ENCODE measurements at regions of chr1 and their contacts with region 1.

Region 1: GRCh38 chr1:4006676-4007374 is 106.8 kb upstream of the C1orf174 start:
- DNase-seq: peak; percentile 83
- ATAC-seq: peak; percentile 58
- H3K4me3 ChIP-seq: no peak overlapping the region
- H3K4me3 Mint-ChIP-seq: peak overlapping the region; percentile 43
- H3K27ac ChIP-seq: peak overlapping the region; percentile 82 to 95
- H3K27ac Mint-ChIP-seq: peak overlapping the region; percentile 96
- H3K4me1 ChIP-seq: peaks cover 4 to 26% of the 10 kb centered on the region in 2 donors
- H3K4me1 Mint-ChIP-seq: peaks cover 15% of the 10 kb centered on the region
- H3K27me3 ChIP-seq: no peaks in the 10 kb centered on the region
- H3K27me3 Mint-ChIP-seq: no peaks in the 10 kb centered on the region
- CTCF ChIP-seq: no peak

Region 2: DNA sequence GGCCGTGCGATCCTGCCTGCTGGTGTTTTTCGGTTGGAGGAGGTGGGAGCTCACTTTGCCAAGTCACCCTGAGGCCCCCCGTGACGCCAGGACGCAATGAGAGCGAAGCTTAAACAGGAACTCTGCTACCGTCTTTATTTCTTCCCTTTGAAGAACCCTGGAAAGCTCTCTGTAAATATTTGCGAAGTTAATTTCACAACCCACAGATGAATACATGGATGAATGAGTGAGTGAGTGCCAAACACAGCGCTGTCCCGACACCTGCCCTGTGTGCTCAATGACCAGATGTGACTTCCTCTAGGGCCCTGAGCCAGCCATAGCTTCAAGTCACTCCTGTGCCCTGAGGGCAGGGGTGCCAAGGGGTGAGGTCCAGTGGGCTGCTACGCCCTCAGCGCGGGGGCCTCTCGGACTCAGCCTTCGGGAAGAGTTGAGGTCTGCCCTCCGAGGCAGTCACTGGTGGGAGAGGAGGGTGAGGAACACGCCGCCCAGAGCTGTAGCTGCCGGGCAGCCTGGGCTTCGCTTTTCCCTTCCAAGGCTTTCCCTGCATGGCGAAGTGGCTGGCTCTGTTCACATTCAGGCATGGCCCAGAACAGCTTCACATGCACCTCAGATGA is 63.9 kb before region 1 on chr1:
- CTCF ChIA-PET with region 1: no interaction called
- POLR2A ChIA-PET with region 1: no interaction called
- intact Hi-C with region 1: no loop called
- DNase-seq: no peak
- ATAC-seq: no peak
- H3K4me3 ChIP-seq: no peak overlapping the region
- H3K4me3 Mint-ChIP-seq: no peak overlapping the region
- H3K27ac ChIP-seq: no peak overlapping the region
- H3K27ac Mint-ChIP-seq: no peak overlapping the region
- H3K4me1 ChIP-seq: no peaks in the 10 kb centered on the region
- H3K4me1 Mint-ChIP-seq: no peaks in the 10 kb centered on the region
- H3K27me3 ChIP-seq: no peaks in the 10 kb centered on the region
- H3K27me3 Mint-ChIP-seq: peaks cover 10% of the 10 kb centered on the region
- CTCF ChIP-seq: no peak

Region 3: DNA sequence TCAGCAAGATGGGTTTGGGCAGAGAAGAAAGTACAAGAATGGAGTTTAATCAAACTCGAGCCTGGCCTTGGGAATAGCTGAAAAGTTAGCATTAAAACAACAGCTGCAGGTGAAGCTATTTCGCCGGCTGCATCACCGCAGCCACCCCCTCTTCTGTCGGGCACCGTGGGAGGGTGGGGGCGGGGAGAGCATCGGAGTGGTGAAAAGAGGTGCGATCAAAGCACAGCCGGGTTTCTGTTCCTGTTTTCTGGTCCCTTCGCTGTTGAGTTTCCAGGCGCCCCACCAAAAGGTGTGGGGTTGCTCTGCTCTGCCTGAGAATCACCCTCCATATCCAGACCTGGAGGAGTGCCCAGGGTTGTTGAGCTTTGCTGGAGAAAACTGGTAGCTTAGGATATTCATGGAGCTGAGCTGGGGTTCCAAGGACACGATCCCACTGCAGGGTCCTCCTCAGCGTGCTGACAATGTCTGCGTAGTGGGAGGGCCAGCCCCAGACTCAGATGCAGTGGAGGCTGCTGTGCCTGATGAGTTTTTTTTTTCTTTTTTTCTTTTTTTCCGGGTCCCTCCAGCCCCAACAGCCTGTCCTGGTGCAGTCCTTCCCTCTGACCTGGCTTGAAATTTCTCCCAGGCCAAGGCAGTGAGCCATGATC is 20.8 kb after region 1 on chr1:
- CTCF ChIA-PET with region 1: interaction called, 4 read pairs
- POLR2A ChIA-PET with region 1: interaction called, 9 read pairs
- intact Hi-C with region 1: loop called (anchors 1 kb)
- DNase-seq: peak; percentile 94
- ATAC-seq: peak; percentile 93
- H3K4me3 ChIP-seq: peak overlapping the region in 3 of 5 experiments; percentile 19 to 47 (median 30)
- H3K4me3 Mint-ChIP-seq: peak overlapping the region; percentile 82
- H3K27ac ChIP-seq: peak overlapping the region; percentile 69 to 80
- H3K27ac Mint-ChIP-seq: peak overlapping the region; percentile 92
- H3K4me1 ChIP-seq: peaks cover 33 to 43% of the 10 kb centered on the region in 2 donors
- H3K4me1 Mint-ChIP-seq: peaks cover 64% of the 10 kb centered on the region
- H3K27me3 ChIP-seq: no peaks in the 10 kb centered on the region
- H3K27me3 Mint-ChIP-seq: no peaks in the 10 kb centered on the region
- CTCF ChIP-seq: no peak